Aorta (tissue), 5 donors: ENCODE measurements at regions of chr19 and their contacts with region 1.

Region 1: DNA sequence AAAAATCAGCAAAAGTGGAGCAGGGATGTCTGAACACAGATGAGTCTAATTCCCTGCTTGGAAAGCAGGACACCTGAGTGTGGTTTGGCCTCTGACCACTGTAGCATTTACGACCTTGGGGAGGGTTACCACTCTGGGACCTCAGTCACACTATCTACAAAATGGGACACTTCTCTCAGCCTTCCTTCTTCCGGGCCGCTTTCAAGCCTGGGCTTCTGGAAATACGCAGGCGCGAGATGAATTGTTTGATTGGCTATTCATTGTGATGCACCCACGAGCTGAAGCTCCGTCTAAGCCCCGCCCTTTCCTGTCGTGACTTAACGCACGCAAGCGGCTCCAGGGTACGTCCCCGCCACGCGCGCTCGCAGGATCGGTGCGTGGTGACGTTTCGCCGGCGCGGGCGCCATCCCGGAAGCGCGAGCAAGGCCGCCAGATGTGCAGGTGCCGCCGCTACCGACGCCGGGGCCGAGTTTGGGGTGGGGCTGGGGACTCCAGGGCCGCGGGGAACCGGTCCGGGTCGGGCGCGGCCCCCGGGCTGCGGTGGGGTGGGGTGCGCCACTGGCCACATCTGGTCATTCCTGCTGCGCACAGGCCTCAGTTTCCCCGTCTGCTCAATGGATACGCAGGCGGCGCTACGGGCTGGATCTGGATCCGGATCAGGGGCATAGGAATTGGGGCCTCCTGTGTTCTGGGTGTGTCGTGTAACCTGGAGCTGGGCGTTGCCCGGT is at the start of gene KXD1:
- DNase-seq: peak; percentile 99
- ATAC-seq: peak; percentile 96
- H3K4me3 ChIP-seq: peak within 1 kb of the TSS; percentile 74 to 88
- H3K27ac ChIP-seq: peak within 1 kb of the TSS; percentile 62 to 96
- H3K4me1 ChIP-seq: peaks cover 0 to 4% of the 10 kb centered on the region in 2 donors
- H3K27me3 ChIP-seq: no peaks in the 10 kb centered on the region
- total RNA-seq, gene KXD1: 85.4 to 92.4 TPM

Region 2: DNA sequence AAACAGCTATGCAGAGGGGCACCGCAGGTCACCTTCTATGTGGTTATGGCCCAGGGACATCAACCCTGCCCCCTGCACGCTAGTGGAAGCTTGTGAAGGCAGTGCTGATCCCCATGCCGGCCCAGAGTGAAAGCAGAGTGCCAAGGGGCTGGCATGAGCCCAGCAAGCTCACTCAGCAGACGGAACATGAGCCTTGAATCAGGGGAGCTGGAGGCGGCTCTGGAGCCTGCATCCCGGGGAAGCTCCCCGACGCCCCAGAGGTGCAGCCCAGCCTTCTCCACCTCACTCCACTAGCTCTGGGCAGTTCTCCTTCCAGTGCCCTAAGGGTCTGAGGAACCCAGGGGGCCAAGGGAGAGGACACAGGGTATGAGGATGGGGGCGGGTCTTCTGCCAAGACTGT is 100.7 kb before region 1 on chr19:
- intact Hi-C with region 1: loop called in 1 of 2 experiments (anchors 2 kb)
- DNase-seq: peak; percentile 81 to 92
- ATAC-seq: peak; percentile 22
- H3K4me3 ChIP-seq: no peak overlapping the region
- H3K27ac ChIP-seq: peak overlapping the region in 1 of 2 donors; percentile 14
- H3K4me1 ChIP-seq: no peaks in the 10 kb centered on the region
- H3K27me3 ChIP-seq: no peaks in the 10 kb centered on the region

Region 3: GRCh38 chr19:18521885-18522624 is 35.6 kb before region 1 on chr19 and contains the start of gene ELL:
- intact Hi-C with region 1: loop called (anchors 5 kb)
- DNase-seq: peak; percentile 100
- ATAC-seq: peak; percentile 96
- H3K4me3 ChIP-seq: peak within 1 kb of the TSS; percentile 78 to 95
- H3K27ac ChIP-seq: peak within 1 kb of the TSS; percentile 33 to 94
- H3K4me1 ChIP-seq: no peaks in the 10 kb centered on the region
- H3K27me3 ChIP-seq: no peaks in the 10 kb centered on the region
- total RNA-seq, gene ELL: 30.0 to 37.9 TPM

Region 4: DNA sequence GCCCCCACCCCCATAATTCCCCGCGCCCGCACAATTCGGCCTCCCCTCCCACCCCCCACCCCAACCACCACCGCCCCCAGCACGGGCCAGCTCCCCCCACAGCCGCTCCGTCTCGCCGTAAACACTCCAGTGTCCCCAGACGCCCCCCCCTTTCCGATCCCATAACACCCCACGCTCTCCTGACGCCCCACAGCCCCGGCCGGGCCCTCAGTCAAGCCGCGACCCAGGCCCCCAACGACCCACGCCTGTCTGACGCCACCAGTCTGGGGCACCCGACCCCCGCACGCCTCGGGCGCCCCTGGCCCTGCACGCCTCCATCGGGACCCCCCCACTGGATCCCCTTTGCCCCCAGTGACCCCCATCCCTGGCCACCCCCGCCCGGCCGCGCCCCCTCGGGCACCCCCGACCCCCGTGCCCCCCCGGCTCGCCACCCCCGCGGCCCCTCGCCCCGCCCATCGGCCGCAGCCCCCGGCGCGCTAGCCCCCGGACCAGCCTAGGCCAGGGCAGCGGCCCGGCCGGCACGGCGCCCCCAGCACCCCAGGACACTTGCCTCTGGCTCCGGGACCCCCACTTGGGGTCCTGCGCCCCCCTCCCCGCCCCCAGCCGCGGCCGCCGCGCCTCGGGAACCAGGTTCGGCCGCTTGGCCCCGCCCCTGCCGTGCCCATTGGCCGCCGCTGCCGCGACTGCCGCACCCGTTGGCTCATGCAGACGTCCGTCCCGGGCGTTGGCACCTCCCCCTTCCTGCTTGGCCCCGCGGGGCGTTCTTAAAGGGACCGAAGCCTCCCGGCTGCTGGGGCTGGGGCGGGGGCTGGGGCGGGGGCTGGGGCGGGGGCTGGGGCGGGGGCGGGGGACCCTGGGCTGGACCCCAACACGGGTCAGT is 14.5 kb before region 1 on chr19 and contains the start of gene FKBP8:
- intact Hi-C with region 1: loop called in 1 of 2 experiments (anchors 1 kb)
- DNase-seq: peak; percentile 98
- ATAC-seq: peak; percentile 96
- H3K4me3 ChIP-seq: peak within 1 kb of the TSS; percentile 97 to 99
- H3K27ac ChIP-seq: peak within 1 kb of the TSS; percentile 33 to 72
- H3K4me1 ChIP-seq: no peaks in the 10 kb centered on the region
- H3K27me3 ChIP-seq: no peaks in the 10 kb centered on the region
- total RNA-seq, gene FKBP8: 225 to 239 TPM

Region 5: DNA sequence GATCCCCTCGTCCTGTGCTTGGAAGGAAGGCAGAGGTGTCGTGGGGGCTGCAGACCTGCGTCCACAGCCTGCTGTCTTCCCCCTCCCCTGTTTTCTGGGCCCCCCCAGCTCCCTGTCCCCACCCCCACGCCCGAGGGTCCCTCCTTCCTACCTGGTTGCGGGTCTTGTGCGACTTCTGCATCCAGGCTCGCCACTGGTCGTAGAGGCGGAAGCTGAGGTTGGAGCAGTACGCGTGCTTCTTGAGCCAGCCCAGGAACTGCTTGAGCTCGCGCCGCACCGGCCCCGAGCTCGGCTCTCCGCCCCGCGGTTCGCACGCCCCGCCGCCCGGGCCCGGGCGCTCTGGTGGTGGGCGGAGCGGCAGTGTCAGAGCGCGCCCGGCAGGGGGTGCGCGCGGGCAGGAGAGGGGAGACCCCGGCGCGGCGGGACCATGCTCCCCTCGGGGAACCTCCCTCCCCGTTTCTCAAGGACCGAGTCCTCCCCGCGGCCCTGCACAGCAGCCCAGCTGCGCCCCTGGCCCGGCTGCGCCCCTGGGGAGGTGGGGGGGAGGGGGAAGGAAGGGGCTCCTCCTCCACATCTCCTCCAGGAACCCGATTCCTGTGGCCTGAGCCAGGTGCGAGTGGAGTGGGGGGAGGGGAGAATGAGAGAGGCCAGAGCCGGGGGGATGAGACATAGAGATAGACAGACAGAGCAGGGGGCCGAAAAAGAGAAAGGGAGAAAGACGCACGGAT is 36.6 kb after region 1 on chr19:
- intact Hi-C with region 1: no loop called
- DNase-seq: peak; percentile 84 to 93
- ATAC-seq: peak; percentile 88
- H3K4me3 ChIP-seq: no peak overlapping the region
- H3K27ac ChIP-seq: no peak overlapping the region
- H3K4me1 ChIP-seq: no peaks in the 10 kb centered on the region
- H3K27me3 ChIP-seq: no peaks in the 10 kb centered on the region

Region 6: GRCh38 chr19:18620916-18621315 is 63.3 kb after region 1 on chr19:
- intact Hi-C with region 1: no loop called
- DNase-seq: no peak
- ATAC-seq: no peak
- H3K4me3 ChIP-seq: no peak overlapping the region
- H3K27ac ChIP-seq: no peak overlapping the region
- H3K4me1 ChIP-seq: no peaks in the 10 kb centered on the region
- H3K27me3 ChIP-seq: no peaks in the 10 kb centered on the region

Region 7: GRCh38 chr19:18649371-18650020 is 91.9 kb after region 1 on chr19:
- intact Hi-C with region 1: no loop called
- DNase-seq: peak; percentile 85 to 86
- ATAC-seq: peak; percentile 70
- H3K4me3 ChIP-seq: no peak overlapping the region
- H3K27ac ChIP-seq: peak overlapping the region in 1 of 2 donors; percentile 85
- H3K4me1 ChIP-seq: no peaks in the 10 kb centered on the region
- H3K27me3 ChIP-seq: no peaks in the 10 kb centered on the region

Region 8: GRCh38 chr19:18683213-18683939 is 125.7 kb after region 1 on chr19 and contains the start of gene CRTC1:
- intact Hi-C with region 1: no loop called
- DNase-seq: peak; percentile 93 to 97
- ATAC-seq: peak; percentile 86
- H3K4me3 ChIP-seq: peak within 1 kb of the TSS; percentile 43 to 46
- H3K27ac ChIP-seq: peak within 1 kb of the TSS in 1 of 2 donors; percentile 42
- H3K4me1 ChIP-seq: no peaks in the 10 kb centered on the region
- H3K27me3 ChIP-seq: no peaks in the 10 kb centered on the region
- total RNA-seq, gene CRTC1: 9.5 to 16.5 TPM